ENCODE measurements at regions of chr16 and their contacts with region 1.

Region 1: GRCh38 chr16:28181515-28181914 is 30.2 kb downstream of the XPO6 start:
- DNase-seq: peak; percentile 91
- H3K4me3 ChIP-seq: no peak overlapping the region
- H3K27ac ChIP-seq: peak overlapping the region; percentile 65
- H3K27me3 ChIP-seq: no peaks in the 10 kb centered on the region
- CTCF ChIP-seq: no peak

Region 2: GRCh38 chr16:28168991-28169554 is 12.4 kb before region 1 on chr16:
- CTCF ChIA-PET with region 1: interaction called, 3 read pairs
- POLR2A ChIA-PET with region 1: interaction called, 11 read pairs
- DNase-seq: no peak
- H3K4me3 ChIP-seq: no peak overlapping the region
- H3K27ac ChIP-seq: no peak overlapping the region
- H3K27me3 ChIP-seq: no peaks in the 10 kb centered on the region
- CTCF ChIP-seq: no peak

Region 3: DNA sequence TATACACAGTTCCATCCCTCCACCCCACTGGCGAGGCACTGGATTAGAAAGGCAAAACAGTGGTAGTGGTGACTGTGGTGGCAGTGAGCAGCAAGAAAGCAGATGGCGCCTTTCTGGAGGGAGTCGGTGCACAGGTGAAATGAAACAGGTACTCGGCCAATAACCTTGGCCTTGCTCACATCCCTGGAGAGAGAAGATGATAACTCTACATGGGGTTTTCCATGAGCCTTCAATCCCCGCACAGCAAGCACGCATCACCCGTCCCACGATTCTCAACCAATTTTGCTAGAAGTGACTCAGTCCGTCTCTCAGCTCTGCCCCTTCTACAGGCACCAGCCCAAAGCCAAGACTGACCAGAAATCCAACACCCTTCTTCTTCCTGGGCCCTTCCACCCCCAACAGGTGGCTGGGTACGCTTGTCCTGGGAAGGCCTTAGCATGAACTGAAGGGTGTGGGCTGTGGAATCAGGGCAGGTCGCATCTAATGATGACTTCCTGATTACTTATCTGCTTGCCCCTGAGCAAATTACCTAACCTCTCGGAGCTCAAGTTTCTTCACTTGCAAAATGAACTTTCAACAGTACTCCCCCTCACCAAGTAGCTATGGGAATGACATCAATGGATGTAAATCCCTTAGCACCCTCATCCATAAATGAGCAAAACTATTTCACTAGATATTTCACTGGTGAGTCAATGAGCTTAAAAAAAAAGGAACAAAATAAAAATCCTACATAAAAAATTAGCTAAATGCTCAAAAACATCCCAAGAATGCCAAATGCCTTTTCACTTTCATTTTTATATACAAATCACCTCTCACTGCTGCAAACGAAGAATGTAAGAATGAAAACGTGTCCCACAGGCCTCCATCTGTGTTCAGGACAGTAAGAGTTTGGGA is 12.3 kb after region 1 on chr16:
- CTCF ChIA-PET with region 1: interaction called, 6 read pairs
- POLR2A ChIA-PET with region 1: interaction called, 29 read pairs
- DNase-seq: peak; percentile 90
- H3K4me3 ChIP-seq: peak overlapping the region; percentile 15
- H3K27ac ChIP-seq: peak overlapping the region; percentile 97
- H3K27me3 ChIP-seq: no peaks in the 10 kb centered on the region
- CTCF ChIP-seq: no peak

Region 4: GRCh38 chr16:28280881-28281836 is 99.6 kb after region 1 on chr16:
- CTCF ChIA-PET with region 1: no interaction called
- POLR2A ChIA-PET with region 1: no interaction called
- DNase-seq: no peak
- H3K4me3 ChIP-seq: no peak overlapping the region
- H3K27ac ChIP-seq: no peak overlapping the region
- H3K27me3 ChIP-seq: peaks cover 12% of the 10 kb centered on the region
- CTCF ChIP-seq: no peak

Measured in AG04450 (cell line).